ENCODE measurements at regions of chr14 and their contacts with region 1.

Region 1: GRCh38 chr14:64823305-64823861 is 56.3 kb downstream of the SPTB start:
- DNase-seq: peak; percentile 58 to 76 (median 76)
- H3K4me3 ChIP-seq: peak overlapping the region in 2 of 7 experiments; percentile 27 to 63
- H3K27ac ChIP-seq: no peak overlapping the region
- H3K4me1 ChIP-seq: peaks cover 0 to 5% (median 2%) of the 10 kb centered on the region in 4 experiments
- H3K27me3 ChIP-seq: peaks cover 0 to 27% (median 6%) of the 10 kb centered on the region in 5 experiments

Region 2: GRCh38 chr14:64812217-64812811 is 11.1 kb before region 1 on chr14:
- CTCF ChIA-PET with region 1: interaction called, 13 read pairs
- POLR2A ChIA-PET with region 1: no interaction called
- DNase-seq: no peak
- H3K4me3 ChIP-seq: no peak overlapping the region
- H3K27ac ChIP-seq: no peak overlapping the region
- H3K4me1 ChIP-seq: peaks cover 0 to 2% (median 0%) of the 10 kb centered on the region in 4 experiments
- H3K27me3 ChIP-seq: peaks cover 0 to 8% (median 0%) of the 10 kb centered on the region in 5 experiments

Region 3: GRCh38 chr14:64880221-64881121 is 57.1 kb after region 1 on chr14:
- CTCF ChIA-PET with region 1: interaction called, 26 read pairs
- POLR2A ChIA-PET with region 1: no interaction called
- DNase-seq: peak; percentile 41 to 75 (median 63)
- H3K4me3 ChIP-seq: peak overlapping the region; percentile 37 to 80 (median 66)
- H3K27ac ChIP-seq: no peak overlapping the region
- H3K4me1 ChIP-seq: peaks cover 0 to 21% (median 18%) of the 10 kb centered on the region in 4 experiments
- H3K27me3 ChIP-seq: peaks cover 19 to 62% (median 31%) of the 10 kb centered on the region in 5 experiments

Region 4: DNA sequence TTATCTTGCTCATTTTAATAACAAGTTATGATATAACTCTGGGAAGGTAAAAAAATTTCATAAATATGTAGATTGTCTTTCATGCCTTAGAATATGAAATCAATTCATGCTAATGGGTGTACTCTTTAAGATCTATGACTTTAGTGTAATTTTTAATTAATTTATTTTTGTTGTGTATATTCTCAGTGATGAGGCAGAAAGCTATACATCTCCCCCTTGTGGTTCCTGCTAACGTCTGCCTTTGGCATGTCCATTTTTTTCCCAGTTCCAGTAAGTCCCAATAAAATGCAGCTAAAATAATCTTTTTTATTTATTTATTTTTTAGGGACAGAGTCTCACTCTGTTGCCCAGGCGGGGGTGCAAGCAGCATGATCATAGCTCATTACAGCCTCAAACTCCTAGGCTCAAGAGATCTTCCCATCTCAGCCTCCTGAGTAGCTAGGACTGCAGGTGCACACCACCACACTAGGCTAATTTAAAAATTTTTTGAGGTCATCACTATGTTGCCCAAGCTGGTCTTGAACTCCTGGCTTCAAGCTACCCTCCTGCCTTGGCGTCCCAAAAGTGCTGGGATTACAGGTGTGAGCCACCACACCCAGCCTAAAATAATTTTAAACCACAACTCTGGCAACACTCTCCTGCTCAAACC is 87.6 kb after region 1 on chr14:
- CTCF ChIA-PET with region 1: interaction called, 14 read pairs
- POLR2A ChIA-PET with region 1: no interaction called
- DNase-seq: peak in 2 of 3 donors; percentile 35 to 41
- H3K4me3 ChIP-seq: no peak overlapping the region
- H3K27ac ChIP-seq: no peak overlapping the region
- H3K4me1 ChIP-seq: peaks cover 10 to 26% (median 19%) of the 10 kb centered on the region in 4 experiments
- H3K27me3 ChIP-seq: no peaks in the 10 kb centered on the region

Measured in common myeloid progenitor, CD34-positive (primary cell).